ENCODE measurements at regions of chr1 and their contacts with region 1.

Region 1: DNA sequence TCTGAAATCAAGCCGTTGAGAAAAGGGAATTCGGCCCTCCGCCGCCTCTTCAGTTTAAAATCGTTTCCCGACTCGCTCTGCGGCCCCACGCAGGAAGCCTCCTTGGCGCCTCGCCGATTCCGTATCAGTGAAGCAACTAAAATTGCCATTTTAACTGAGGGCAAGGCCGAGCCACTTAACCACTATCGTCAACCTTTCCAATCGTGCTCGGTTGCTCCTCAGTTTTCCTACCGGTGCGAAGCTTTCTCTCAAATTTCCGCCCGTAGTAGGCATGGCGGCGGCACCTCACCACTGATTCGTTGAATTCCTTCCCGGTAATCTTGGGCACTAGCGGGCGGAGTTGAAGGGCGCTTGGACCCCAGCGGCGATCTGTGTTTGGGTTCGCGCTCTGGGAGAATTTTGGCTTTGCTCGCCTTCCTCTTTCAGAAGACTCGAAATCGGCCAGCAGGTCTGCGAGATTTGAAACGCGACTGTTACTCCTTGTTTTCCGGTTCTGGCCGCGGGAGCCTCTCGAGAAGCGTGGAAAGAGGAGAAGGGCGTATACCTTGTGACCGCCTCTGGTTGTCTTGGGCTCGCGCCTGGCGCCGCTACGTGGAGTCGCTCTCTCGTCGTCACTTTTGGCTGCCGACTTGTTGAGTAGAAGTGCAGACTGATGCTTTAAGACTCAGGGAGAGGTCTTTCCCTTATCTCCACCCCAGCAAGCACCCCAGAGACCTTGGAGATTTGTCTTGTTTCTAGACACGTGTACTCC is at the starts of genes CENPL and DARS2:
- DNase-seq: peak; percentile 99
- H3K4me3 ChIP-seq: peak within 1 kb of the TSS; percentile 55 to 78 (median 69)
- H3K27ac ChIP-seq: peak within 1 kb of the TSS; percentile 87 to 92 (median 91)
- H3K4me1 ChIP-seq: peaks cover 0 to 25% (median 19%) of the 10 kb centered on the region in 4 donors
- H3K27me3 ChIP-seq: no peaks in the 10 kb centered on the region
- CTCF ChIP-seq: no peak
- EP300 ChIP-seq: peak in 1 of 4 donors; percentile 2
- POLR2A ChIP-seq: no peak
- total RNA-seq, gene CENPL: 3.8 to 7.8 (median 5.4) TPM
- total RNA-seq, gene DARS2: 5.2 to 10.0 (median 7.3) TPM

Region 2: DNA sequence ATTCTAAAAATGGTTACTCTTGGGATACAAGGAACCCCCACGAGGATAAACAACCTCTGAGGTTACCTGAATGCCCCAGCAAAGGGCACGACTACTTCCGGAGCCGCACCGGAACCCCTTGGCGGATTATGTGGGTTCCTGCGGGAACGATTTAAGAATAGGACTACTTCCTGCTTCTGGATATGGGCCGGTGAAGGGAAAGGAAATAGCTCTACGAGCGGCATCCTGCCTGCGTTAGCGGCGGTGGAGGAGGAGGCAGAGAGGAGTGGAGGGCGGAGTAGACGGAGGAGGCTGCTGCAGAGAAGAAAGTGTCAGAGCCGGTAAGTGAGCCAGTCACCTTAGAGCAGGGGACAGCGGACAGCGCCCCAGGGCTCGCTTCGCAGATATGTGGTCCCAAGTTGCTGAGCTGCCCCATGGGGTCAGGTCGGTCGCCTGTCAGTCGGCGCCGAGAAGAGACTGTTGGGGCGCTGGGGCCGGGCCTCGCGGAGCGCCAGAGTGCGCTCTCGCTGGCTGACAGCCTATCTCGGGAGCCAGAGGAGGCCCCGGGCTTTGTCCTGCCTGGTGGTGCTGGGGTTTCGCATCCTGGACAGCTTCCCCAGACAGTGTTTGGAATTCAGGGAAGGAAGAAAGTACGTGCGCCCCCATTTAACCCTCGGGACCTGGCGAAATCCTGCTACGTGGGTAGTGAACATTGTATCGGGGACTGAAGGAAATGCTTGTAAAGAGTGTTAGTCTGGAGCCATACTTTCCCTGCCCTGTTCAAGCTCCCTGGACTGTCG is 109.6 kb before region 1 on chr1 and contains the start of gene KLHL20:
- intact Hi-C with region 1: loop called (anchors 1 kb)
- DNase-seq: peak; percentile 89
- H3K4me3 ChIP-seq: peak within 1 kb of the TSS; percentile 60 to 82 (median 70)
- H3K27ac ChIP-seq: peak within 1 kb of the TSS; percentile 87 to 94 (median 94)
- H3K4me1 ChIP-seq: peaks cover 0 to 27% (median 19%) of the 10 kb centered on the region in 4 donors
- H3K27me3 ChIP-seq: peaks cover 0 to 14% (median 0%) of the 10 kb centered on the region in 3 donors
- CTCF ChIP-seq: peak in 2 of 4 experiments; percentile 21 to 38
- EP300 ChIP-seq: no peak
- POLR2A ChIP-seq: peak; percentile 51 to 61
- total RNA-seq, gene KLHL20: 35.5 to 57.7 (median 42.6) TPM

Region 3: DNA sequence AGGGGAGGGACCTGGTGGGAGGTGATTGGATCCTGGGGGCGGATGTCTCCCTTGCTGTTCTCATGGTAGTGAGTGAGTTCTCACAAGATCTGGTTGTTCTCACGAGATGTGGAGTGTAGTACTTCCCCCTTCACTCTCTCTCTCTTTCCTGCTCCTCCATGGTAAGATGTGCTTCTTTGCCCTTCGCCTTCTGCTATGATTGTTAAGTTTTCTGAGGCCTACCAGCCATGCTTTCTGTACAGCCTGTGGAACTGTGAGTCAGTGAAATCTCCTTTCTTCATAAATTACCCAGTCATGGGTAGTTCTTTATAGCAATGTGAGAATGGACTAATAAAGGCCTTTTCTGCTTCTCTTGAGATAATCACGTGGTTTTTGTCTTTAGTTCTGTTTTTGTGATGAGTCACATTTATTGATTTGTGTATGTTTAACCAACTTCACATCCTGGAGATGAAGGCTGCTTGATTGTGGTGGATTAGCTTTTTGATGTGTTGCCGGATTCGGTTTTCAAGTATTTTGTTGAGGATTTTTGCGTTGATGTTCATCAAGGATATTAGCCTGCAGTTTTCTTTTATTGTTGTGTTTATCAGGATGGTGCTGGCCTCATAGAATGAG is 380.3 kb after region 1 on chr1:
- intact Hi-C with region 1: no loop called
- DNase-seq: no peak
- H3K4me3 ChIP-seq: no peak overlapping the region
- H3K27ac ChIP-seq: no peak overlapping the region
- H3K4me1 ChIP-seq: no peaks in the 10 kb centered on the region
- H3K27me3 ChIP-seq: no peaks in the 10 kb centered on the region
- CTCF ChIP-seq: no peak
- EP300 ChIP-seq: no peak
- POLR2A ChIP-seq: no peak

Measured in sigmoid colon (tissue), 7 donors.